HEK293 (cell line): ENCODE measurements at regions of chr9 and their contacts with region 1.

Region 1: GRCh38 chr9:9790216-9790872 is 822.5 kb downstream of the PTPRD start:
- H3K4me3 ChIP-seq: no peak overlapping the region
- H3K27ac ChIP-seq: no peak overlapping the region
- H3K4me1 ChIP-seq: no peaks in the 10 kb centered on the region
- CTCF ChIP-seq: no peak

Region 2: GRCh38 chr9:9605681-9606080 is 184.7 kb before region 1 on chr9:
- CTCF ChIA-PET with region 1: interaction called, 48 read pairs
- POLR2A ChIA-PET with region 1: no interaction called
- H3K4me3 ChIP-seq: no peak overlapping the region
- H3K27ac ChIP-seq: no peak overlapping the region
- H3K4me1 ChIP-seq: no peaks in the 10 kb centered on the region
- CTCF ChIP-seq: no peak

Region 3: DNA sequence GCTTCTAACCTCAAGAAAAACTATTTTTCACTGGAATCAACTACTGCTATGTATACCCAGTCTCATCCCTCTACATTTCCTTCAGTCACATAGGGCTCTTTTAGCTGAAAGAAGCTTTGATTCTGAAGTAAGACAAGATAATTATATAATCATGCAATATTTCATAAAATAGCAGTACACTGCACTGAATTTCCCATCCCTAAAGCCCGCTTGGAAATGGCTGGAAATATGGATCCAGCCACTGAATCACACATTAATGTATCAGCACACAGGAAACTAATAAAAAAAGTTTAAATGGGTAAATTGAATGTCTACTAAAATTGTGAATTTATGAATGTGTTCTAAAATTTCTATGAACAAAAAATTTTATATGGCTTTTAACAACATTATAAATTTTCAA is 13.8 kb after region 1 on chr9:
- CTCF ChIA-PET with region 1: interaction called, 28 read pairs
- POLR2A ChIA-PET with region 1: no interaction called
- H3K4me3 ChIP-seq: no peak overlapping the region
- H3K27ac ChIP-seq: no peak overlapping the region
- H3K4me1 ChIP-seq: no peaks in the 10 kb centered on the region
- CTCF ChIP-seq: no peak